Activated CD8-positive, alpha-beta T cell treated with anti-CD3 and anti-CD28 coated beads for 36 hours (primary cell): ENCODE measurements at regions of chr4 and their contacts with region 1.

Region 1: GRCh38 chr4:153466081-153466948 is at the start of gene TMEM131L:
- DNase-seq: peak; percentile 64
- ATAC-seq: peak; percentile 70
- H3K4me3 Mint-ChIP-seq: peak within 1 kb of the TSS; percentile 98
- H3K27ac Mint-ChIP-seq: peak within 1 kb of the TSS; percentile 88
- H3K4me1 Mint-ChIP-seq: peaks cover 31% of the 10 kb centered on the region
- H3K27me3 Mint-ChIP-seq: no peaks in the 10 kb centered on the region
- CTCF ChIP-seq: no peak
- total RNA-seq, gene TMEM131L: 51.7 to 52.4 TPM

Region 2: GRCh38 chr4:153393397-153393796 is 72.9 kb before region 1 on chr4:
- CTCF ChIA-PET with region 1: no interaction called
- POLR2A ChIA-PET with region 1: no interaction called
- intact Hi-C with region 1: no loop called
- DNase-seq: no peak
- ATAC-seq: no peak
- H3K4me3 Mint-ChIP-seq: no peak overlapping the region
- H3K27ac Mint-ChIP-seq: no peak overlapping the region
- H3K4me1 Mint-ChIP-seq: peaks cover 6% of the 10 kb centered on the region
- H3K27me3 Mint-ChIP-seq: no peaks in the 10 kb centered on the region
- CTCF ChIP-seq: no peak

Region 3: DNA sequence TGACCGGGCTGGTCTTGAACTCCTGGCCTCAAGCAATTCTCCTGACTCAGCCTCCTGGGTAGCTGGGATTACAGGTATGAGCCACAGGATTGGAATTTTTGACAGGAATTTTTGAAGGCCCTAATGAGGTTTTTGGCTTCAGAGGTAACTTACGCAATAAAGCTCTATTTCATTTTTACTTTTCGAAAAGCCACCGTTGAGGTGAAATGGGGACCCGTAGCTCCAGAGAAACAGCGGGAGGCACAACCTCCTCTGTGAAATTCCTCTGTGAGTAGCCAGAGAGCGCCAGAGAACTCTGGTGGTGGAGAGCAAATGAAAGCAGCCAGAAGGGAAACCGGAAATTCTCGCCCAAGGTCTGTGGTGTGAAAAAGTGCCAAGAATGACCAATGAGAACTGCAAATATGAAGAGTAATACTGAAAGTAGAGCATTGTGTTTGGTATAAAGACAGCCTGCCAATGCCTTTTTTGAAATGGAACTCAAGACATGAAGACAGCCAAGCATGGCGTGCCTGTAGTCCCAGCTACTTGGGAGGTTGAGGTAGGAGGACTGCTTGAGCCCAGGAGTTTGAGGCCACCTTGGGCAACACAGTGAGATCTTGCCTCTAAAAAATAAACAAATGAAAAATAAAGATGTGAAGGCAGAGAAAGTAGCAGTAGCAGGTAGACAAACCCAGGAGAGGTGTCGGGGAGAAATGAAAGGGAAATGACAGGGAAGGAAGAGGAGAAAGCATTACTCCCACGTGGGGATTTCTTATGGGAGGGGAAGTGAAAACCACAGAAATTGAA is 33.2 kb before region 1 on chr4:
- CTCF ChIA-PET with region 1: interaction called, 23 read pairs
- POLR2A ChIA-PET with region 1: interaction called, 7 read pairs
- intact Hi-C with region 1: loop called (anchors 5 kb)
- DNase-seq: peak; percentile 91
- ATAC-seq: peak; percentile 86
- H3K4me3 Mint-ChIP-seq: peak overlapping the region; percentile 80
- H3K27ac Mint-ChIP-seq: peak overlapping the region; percentile 97
- H3K4me1 Mint-ChIP-seq: peaks cover 72% of the 10 kb centered on the region
- H3K27me3 Mint-ChIP-seq: no peaks in the 10 kb centered on the region
- CTCF ChIP-seq: peak; percentile 82

Region 4: DNA sequence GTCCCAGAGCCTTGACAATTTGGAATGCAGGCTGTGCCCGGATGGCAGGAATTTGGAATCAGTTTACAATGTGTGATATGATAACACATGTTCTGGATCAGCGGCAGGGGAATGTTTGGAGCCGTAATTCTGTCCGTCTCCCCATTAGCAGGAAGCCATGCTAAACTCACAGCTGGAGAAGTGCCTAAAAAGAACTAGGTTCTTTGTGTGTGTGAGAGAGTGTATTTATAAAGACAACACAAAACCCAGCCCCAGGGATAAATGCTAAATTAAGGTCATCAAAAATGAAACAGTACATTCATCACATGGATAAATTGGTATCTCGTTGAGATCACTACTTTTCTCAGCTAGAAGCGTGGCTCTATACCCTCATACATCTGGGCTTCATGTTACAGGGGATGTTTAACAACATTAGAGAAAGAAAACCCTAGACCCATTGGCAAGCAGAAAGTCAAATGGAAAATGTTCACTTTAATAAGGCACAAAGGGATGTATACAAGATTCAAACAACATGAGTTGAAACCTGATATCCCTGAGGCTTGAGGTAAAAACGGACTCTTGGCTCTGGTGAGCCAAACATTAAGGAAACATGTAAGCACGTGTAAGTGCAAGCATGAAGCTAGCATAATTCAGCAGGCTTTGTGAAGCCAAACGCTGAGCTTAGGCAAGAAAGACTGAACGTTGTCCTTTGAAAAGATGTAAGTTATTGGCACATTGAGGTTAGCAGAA is 18.1 kb before region 1 on chr4:
- CTCF ChIA-PET with region 1: interaction called, 18 read pairs
- POLR2A ChIA-PET with region 1: interaction called, 14 read pairs
- intact Hi-C with region 1: no loop called
- DNase-seq: no peak
- ATAC-seq: no peak
- H3K4me3 Mint-ChIP-seq: no peak overlapping the region
- H3K27ac Mint-ChIP-seq: no peak overlapping the region
- H3K4me1 Mint-ChIP-seq: peaks cover 16% of the 10 kb centered on the region
- H3K27me3 Mint-ChIP-seq: no peaks in the 10 kb centered on the region
- CTCF ChIP-seq: no peak

Region 5: DNA sequence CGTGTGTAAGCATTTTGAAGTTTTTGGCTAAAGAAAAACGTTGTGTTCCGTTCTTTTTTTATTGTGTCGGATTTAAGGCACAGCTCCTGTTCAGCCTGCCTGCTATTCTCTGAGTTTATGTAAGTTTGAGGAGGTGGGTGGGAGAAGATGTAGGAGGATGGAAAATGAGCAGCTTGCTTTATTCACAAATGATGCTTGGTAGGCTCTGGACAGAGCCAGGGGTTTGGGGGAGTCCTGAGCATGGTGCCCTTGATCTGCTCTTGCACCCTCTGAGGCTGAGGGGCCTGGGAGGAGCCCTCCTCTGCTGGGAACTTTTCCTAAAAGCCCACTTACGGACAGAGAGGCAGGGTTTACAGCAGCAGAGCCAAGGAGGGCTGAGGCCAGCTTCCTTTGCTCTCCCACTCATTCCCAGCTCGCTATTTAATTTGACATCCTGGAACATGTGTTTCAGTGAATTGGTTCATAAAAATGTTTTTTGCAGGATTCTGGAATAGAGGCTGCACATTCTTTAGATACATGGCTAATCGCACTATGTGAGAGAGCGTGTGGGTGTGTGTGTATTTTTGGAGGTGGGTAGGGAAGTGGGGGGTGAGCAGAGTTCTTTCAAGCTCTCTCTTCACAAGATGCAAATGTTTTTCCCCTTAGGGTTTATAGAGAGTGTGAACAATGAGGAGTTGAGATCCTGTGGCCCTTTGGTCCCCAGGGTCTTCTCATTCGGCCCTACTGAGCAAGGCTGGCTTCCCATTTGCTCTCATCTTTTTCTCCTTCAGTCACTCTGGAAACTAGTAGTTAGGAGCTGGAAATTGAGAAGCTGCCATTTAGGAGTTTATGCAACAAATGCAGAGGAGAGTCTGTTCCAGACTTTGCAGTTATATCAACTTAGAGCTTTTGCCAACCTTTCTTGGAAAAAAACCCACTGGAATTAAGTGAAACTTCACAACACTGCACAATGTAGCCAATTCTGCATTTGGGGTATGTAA is 32.0 kb after region 1 on chr4:
- CTCF ChIA-PET with region 1: interaction called, 3 read pairs
- POLR2A ChIA-PET with region 1: interaction called, 25 read pairs
- intact Hi-C with region 1: loop called (anchors 2 kb)
- DNase-seq: peak; percentile 43
- ATAC-seq: peak; percentile 21
- H3K4me3 Mint-ChIP-seq: peak overlapping the region; percentile 75
- H3K27ac Mint-ChIP-seq: peak overlapping the region; percentile 97
- H3K4me1 Mint-ChIP-seq: peaks cover 92% of the 10 kb centered on the region
- H3K27me3 Mint-ChIP-seq: no peaks in the 10 kb centered on the region
- CTCF ChIP-seq: no peak

Region 6: DNA sequence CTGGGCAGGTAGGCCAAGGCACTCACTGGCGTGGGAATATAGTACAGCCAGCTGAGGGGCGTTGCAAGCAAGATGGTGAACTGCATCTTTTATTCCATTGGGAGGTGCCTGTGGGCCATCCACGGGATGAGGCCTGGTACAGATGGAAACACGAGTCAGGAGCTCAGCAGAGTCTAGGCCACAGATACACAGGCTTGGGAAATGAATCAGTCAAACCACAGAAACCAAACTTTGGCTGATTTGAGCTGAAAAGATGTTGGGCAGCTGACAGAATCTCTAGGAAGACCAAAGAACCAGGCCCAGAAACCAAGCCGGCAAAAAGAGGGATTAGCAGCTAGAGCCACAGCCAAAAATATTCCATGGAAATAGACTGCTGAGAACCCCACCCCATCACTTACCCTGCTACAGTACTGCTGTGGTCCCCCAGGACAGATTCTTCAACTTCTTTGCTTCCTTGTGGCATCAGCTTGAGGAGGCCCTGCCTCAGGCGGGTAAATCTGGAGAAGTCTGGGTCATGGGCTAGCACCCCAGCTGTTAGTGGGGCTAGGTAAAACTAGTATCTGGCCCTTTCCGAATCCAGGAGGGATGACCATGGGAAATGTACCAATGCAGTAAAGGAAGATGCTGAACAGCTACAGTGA is 75.3 kb after region 1 on chr4:
- CTCF ChIA-PET with region 1: interaction called, 10 read pairs
- POLR2A ChIA-PET with region 1: interaction called, 6 read pairs
- intact Hi-C with region 1: no loop called
- DNase-seq: peak; percentile 39
- ATAC-seq: peak; percentile 75
- H3K4me3 Mint-ChIP-seq: no peak overlapping the region
- H3K27ac Mint-ChIP-seq: peak overlapping the region; percentile 71
- H3K4me1 Mint-ChIP-seq: peaks cover 71% of the 10 kb centered on the region
- H3K27me3 Mint-ChIP-seq: no peaks in the 10 kb centered on the region
- CTCF ChIP-seq: no peak